Mucosa of descending colon (tissue), 3 donors: ENCODE measurements at regions of chr1 and their contacts with region 1.

Region 1: GRCh38 chr1:24659993-24660665 is 17.0 kb downstream of the SRRM1 start:
- DNase-seq: no peak
- ATAC-seq: no peak
- H3K4me3 ChIP-seq: no peak overlapping the region
- H3K4me1 ChIP-seq: no peaks in the 10 kb centered on the region
- CTCF ChIP-seq: no peak

Region 2: GRCh38 chr1:25223471-25223870 is 563.3 kb after region 1 on chr1:
- intact Hi-C with region 1: loop called in 1 of 2 experiments (anchors 10 kb)
- DNase-seq: no peak
- ATAC-seq: no peak
- H3K4me3 ChIP-seq: no peak overlapping the region
- H3K4me1 ChIP-seq: peaks cover 2% of the 10 kb centered on the region
- CTCF ChIP-seq: no peak